PC-9 (cell line): ENCODE measurements at regions of chr6 and their contacts with region 1.

Region 1: DNA sequence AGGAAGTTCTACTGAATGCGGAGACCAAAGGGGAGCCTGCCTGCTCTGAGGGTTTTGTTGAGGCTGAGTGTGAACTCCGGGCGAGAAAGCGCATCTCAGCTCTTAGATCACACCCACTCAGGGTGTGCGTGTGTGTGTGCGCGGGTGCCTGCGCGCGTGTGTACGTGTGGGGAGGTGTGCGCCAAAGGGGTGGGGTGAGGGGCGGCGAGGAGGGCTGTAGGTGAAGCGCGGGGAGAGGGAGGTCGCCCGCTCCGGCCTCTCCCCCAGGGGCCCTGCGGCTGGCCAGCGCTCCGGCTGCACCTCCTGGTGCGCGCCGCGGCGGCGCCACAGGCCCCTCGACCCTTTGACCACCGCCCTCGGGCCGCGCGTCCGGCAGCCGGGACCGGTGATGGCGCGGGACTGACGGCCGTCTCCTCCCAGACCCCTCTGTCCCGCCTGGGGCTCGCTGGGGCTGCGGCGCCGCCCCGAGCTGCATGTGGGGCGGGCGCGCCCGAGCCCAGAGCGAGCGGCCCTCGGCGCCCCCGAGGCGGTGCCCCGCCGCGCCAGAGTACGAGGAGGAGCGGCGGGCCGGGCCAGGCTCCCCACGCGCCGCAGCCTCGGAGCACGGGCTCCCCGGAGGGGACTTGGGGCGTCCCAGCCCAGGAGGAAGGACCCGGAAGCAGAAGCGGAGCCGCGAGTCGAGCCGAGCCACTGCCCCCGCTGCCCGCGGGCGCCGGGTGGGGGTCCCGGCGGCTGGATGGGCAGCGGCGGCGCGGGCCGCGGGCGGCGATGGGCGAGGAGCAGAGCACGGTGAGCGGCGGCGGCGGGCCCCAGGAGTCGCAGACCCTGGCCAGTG is at the start of gene RNF217:
- DNase-seq: peak; percentile 51 to 63
- H3K4me3 ChIP-seq: peak within 1 kb of the TSS; percentile 79
- H3K27ac ChIP-seq: peak within 1 kb of the TSS; percentile 67
- H3K4me1 ChIP-seq: peaks cover 44% of the 10 kb centered on the region
- H3K27me3 ChIP-seq: no peaks in the 10 kb centered on the region
- CTCF ChIP-seq: no peak
- total RNA-seq, gene RNF217: 38.3 and 42.3 TPM in 2 replicates

Region 2: GRCh38 chr6:124881898-124882579 is 80.0 kb before region 1 on chr6:
- CTCF ChIA-PET with region 1: no interaction called
- POLR2A ChIA-PET with region 1: no interaction called
- intact Hi-C with region 1: loop called (anchors 5 kb)
- DNase-seq: peak; percentile 29 to 77
- H3K4me3 ChIP-seq: peak overlapping the region; percentile 33; the same call in 1 of the 2 replicates
- H3K27ac ChIP-seq: peak overlapping the region; percentile 70
- H3K4me1 ChIP-seq: peaks cover 37% of the 10 kb centered on the region
- H3K27me3 ChIP-seq: no peaks in the 10 kb centered on the region
- CTCF ChIP-seq: no peak

Region 3: DNA sequence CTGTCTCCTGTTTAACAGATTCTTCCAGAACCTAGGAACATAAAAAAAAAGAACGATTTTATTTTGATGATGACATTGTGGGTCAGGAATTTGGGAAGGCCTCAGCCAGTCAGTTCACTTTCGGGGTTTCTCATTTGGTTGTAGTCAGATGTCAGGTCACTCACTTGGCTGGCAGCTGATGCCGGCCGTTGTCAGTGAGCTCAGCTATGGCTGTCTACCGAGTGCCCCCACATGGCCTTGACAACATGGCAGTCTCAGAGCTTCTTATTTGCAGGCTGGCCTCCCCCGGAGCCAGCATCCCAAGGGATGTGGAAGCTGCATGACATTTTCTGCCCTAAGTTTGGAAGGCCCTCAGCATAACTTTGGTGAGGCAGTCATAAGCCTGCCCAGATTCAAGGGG is 11.8 kb after region 1 on chr6:
- CTCF ChIA-PET with region 1: no interaction called
- POLR2A ChIA-PET with region 1: no interaction called
- intact Hi-C with region 1: no loop called
- DNase-seq: no peak
- H3K4me3 ChIP-seq: no peak overlapping the region
- H3K27ac ChIP-seq: no peak overlapping the region
- H3K4me1 ChIP-seq: peaks cover 8% of the 10 kb centered on the region; the same call in 1 of the 2 replicates
- H3K27me3 ChIP-seq: no peaks in the 10 kb centered on the region
- CTCF ChIP-seq: no peak

Region 4: DNA sequence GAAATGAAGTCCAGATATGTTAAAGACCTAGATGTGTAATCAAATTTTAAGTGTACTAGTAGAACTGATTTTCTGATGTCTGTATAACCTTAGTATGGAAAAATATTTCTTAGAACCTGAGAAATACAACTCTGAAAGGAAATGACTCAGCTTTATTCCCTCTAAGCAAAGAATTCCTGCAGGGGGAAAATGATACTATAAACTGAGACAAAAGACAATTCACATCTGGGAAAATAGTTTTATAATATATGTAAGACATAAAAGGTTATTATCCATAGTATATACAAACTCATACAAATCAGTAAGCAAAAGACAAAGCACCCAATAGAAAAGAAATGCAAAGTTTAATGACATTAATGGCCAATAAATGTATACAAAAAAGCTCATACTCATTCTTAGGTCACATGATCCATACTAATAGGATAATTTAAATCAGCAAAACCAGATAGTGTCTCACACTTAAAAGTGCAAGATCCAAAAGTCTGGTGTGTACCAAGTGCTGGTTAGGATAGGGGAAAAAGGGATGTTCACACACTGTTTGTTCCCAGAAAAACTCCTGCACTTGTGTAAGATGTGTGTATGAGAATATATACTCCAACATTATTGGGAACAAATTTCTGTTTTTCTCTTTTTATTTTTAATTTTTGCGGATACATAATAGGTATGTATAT is 22.8 kb after region 1 on chr6:
- CTCF ChIA-PET with region 1: interaction called, 14 read pairs
- POLR2A ChIA-PET with region 1: interaction called, 10 read pairs
- intact Hi-C with region 1: loop called (anchors 2 kb)
- DNase-seq: no peak
- H3K4me3 ChIP-seq: no peak overlapping the region
- H3K27ac ChIP-seq: peak overlapping the region; percentile 76
- H3K4me1 ChIP-seq: peaks cover 48% of the 10 kb centered on the region
- H3K27me3 ChIP-seq: no peaks in the 10 kb centered on the region
- CTCF ChIP-seq: no peak

Region 5: GRCh38 chr6:125046107-125046925 is 84.3 kb after region 1 on chr6:
- CTCF ChIA-PET with region 1: no interaction called
- POLR2A ChIA-PET with region 1: no interaction called
- intact Hi-C with region 1: loop called (anchors 2 kb)
- DNase-seq: peak in 1 of 2 experiments; percentile 74
- H3K4me3 ChIP-seq: no peak overlapping the region
- H3K27ac ChIP-seq: no peak overlapping the region
- H3K4me1 ChIP-seq: no peaks in the 10 kb centered on the region
- H3K27me3 ChIP-seq: no peaks in the 10 kb centered on the region
- CTCF ChIP-seq: no peak

Region 6: DNA sequence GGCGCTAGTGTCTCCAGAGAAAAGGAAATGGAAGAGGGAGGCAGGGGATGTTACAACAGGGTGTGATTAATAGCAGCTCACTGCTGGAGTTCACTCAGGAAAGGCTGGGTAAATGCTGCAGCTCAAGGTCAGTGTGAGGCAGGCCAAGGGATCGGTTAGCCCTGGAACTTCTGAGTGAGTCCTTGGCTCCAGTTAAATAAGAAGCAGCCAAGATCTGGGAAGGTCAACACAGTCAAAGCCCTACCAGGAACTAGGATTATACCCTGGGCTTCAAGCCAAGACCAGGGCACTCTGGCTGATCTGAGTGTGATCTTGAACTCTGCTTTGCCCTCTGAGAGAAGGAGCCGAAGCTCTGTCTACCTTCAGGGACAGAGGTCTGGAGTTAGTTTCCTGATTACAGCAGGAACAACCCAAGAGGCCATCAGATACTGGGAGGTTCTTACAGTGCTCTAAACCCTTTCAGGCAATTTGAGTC is 235.8 kb after region 1 on chr6:
- CTCF ChIA-PET with region 1: no interaction called
- POLR2A ChIA-PET with region 1: no interaction called
- intact Hi-C with region 1: loop called (anchors 5 kb)
- DNase-seq: peak; percentile 63 to 68
- H3K4me3 ChIP-seq: no peak overlapping the region
- H3K27ac ChIP-seq: peak overlapping the region; percentile 55
- H3K4me1 ChIP-seq: peaks cover 87% of the 10 kb centered on the region
- H3K27me3 ChIP-seq: no peaks in the 10 kb centered on the region
- CTCF ChIP-seq: no peak